GM12878 (cell line): ENCODE measurements at regions of chr9 and their contacts with region 1.

Region 1: DNA sequence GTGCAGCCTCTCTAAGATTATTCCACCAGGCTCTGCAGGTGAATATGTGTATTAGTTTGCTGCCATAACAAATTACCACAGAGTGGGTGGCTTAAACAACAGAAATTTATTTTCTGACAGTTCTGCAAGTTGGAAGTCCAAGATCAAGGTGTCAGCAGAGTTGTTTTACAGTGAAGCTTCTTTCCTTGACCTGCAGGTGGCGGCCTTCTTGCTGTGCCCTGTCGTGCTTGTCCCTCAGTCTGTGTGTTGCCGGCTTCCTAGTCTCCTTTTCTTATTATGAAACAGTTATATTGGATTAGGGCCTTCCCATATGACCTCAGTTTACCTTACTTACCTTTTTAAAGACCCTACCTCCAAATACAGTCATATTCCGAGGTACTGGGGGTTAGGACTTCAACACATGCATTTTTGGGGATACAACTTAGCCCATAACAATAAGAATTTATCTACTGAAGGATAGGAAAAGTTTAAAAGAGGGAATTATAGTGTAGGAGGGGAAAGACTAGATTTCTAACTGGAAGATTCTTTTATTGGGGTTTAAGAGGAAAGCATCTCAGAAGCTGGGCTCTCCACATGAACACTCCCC is 97.4 kb downstream of the OSTF1 start:
- DNase-seq: no peak
- ATAC-seq: peak; percentile 94
- H3K4me3 ChIP-seq: no peak overlapping the region
- H3K27ac ChIP-seq: no peak overlapping the region
- H3K4me1 ChIP-seq: no peaks in the 10 kb centered on the region
- H3K27me3 ChIP-seq: no peaks in the 10 kb centered on the region; a peak in 1 of 4 replicates
- CTCF ChIP-seq: peak; percentile 57 to 90 (median 76)
- EP300 ChIP-seq: no peak
- POLR2A ChIP-seq: no peak
- RAD21 ChIP-seq: no peak

Region 2: GRCh38 chr9:75088260-75088905 is 97.3 kb before region 1 on chr9 and contains the start of gene OSTF1:
- CTCF ChIA-PET with region 1: interaction called, 12 read pairs
- POLR2A ChIA-PET with region 1: interaction called, 5 read pairs
- RAD21 ChIA-PET with region 1: interaction called, 4 read pairs
- SMC1A ChIA-PET with region 1: no interaction called
- in situ Hi-C with region 1: no loop called
- intact Hi-C with region 1: no loop called
- DNase-seq: peak; percentile 64
- ATAC-seq: peak; percentile 89
- H3K4me3 ChIP-seq: peak within 1 kb of the TSS; percentile 93
- H3K27ac ChIP-seq: peak within 1 kb of the TSS; percentile 93
- H3K4me1 ChIP-seq: peaks cover 13% of the 10 kb centered on the region; the same call in 1 of the 2 replicates
- H3K27me3 ChIP-seq: no peaks in the 10 kb centered on the region
- CTCF ChIP-seq: no peak
- EP300 ChIP-seq: no peak
- POLR2A ChIP-seq: peak; percentile 95
- RAD21 ChIP-seq: no peak
- polyA plus RNA-seq, gene OSTF1: 36.2 to 45.3 TPM

Region 3: GRCh38 chr9:75120686-75121085 is 65.0 kb before region 1 on chr9:
- CTCF ChIA-PET with region 1: no interaction called
- POLR2A ChIA-PET with region 1: no interaction called
- RAD21 ChIA-PET with region 1: no interaction called
- SMC1A ChIA-PET with region 1: no interaction called
- in situ Hi-C with region 1: no loop called
- intact Hi-C with region 1: no loop called
- DNase-seq: no peak
- ATAC-seq: no peak
- H3K4me3 ChIP-seq: no peak overlapping the region
- H3K27ac ChIP-seq: no peak overlapping the region
- H3K4me1 ChIP-seq: no peaks in the 10 kb centered on the region
- H3K27me3 ChIP-seq: no peaks in the 10 kb centered on the region
- CTCF ChIP-seq: no peak
- EP300 ChIP-seq: no peak
- POLR2A ChIP-seq: no peak
- RAD21 ChIP-seq: no peak